ENCODE measurements at regions of chr15 and their contacts with region 1.

Region 1: GRCh38 chr15:91271565-91272153 is 171.6 kb downstream of the SV2B start:
- DNase-seq: peak in 1 of 2 donors; percentile 51
- H3K4me3 ChIP-seq: no peak overlapping the region
- CTCF ChIP-seq: peak in 1 of 3 donors; percentile 41
- POLR2A ChIP-seq: no peak

Region 2: DNA sequence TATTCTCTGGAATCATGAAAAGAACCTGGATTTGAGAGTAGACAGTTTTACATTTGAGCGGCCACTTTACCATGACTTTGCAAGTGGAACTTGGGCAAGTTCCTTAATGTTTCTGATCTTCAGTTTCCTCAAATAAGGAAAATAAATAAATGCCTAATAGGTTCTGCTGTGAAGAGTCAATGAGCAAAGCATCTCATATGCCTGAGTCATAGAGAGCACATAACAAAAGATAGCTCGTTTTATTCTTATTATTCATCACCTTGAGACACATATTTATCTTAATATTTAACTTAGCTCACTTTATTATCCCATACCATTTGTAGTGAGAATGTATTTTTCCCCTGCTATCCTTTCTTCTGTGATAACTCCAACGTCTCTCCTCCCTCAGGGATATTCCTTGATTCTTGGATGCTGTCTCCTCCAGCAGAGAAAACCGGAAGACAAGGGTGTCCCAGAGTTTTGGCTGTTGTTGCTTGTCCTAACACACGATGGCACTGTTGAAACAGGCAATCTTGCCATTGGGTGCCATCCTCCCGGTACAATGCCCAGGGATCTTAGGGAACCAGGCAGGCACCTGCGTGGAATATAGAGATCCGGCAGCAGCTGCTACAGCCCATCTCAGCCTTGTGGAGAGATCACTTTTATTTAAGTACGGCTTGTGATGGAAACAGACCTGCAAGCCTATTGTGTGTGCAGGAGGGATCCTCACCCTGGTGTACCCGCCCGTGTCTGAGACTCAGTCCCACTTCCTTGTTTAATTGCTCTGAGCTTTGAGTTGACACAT is 215.9 kb before region 1 on chr15:
- intact Hi-C with region 1: loop called (anchors 5 kb)
- DNase-seq: peak in 1 of 2 donors; percentile 57
- H3K4me3 ChIP-seq: no peak overlapping the region
- CTCF ChIP-seq: no peak
- POLR2A ChIP-seq: no peak